ENCODE measurements at regions of chr19 and their contacts with region 1.

Region 1: DNA sequence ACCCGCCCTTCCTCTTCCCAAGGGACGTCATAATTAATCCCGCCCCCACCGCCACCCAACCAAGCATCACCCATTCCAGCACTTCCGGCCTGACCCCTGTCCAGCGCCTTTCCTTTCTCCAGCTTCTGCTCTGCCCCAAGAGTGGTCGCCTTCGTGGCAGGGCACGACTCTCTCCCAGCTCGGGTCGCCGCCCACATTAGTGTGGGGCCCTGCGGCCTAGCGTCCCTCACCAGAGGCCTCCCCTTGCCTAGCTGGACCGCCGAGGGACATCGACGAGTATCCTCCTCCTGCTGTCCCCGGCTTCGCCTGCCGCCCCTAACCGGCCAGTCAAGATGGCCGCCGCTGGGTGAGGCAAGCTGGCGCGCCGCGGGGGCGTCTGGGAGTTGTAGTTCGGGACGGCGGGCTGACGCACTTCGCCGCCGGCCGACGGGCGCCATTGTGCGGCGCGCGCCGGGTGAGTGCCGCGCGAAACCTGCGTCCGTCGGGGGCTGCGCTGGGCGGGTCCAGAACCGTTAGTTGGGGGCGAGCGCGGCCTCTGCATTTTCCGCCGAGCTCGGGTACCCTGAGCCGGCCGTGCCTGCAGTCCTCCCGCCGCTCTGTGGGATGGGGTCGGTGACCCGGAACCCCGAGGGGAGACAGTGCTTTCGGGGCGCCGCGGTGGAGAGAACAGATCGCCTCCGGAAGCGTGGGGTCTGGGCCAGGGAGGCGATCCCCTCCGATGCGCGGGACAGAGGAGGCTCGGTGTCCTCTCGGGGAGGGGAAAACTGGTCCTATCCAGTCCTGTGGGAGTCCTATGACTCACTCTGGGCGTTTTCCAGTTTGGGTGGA is at the start of gene ZNF274:
- DNase-seq: peak; percentile 94
- H3K4me3 Mint-ChIP-seq: peak within 1 kb of the TSS; percentile 82
- H3K27ac Mint-ChIP-seq: peak within 1 kb of the TSS; percentile 94
- H3K4me1 Mint-ChIP-seq: peaks cover 13% of the 10 kb centered on the region
- H3K27me3 Mint-ChIP-seq: no peaks in the 10 kb centered on the region
- total RNA-seq, gene ZNF274: 14.6 to 16.9 TPM

Region 2: GRCh38 chr19:57527136-57527881 is 655.9 kb before region 1 on chr19 and contains the start of gene ZNF549:
- CTCF ChIA-PET with region 1: no interaction called
- intact Hi-C with region 1: loop called (anchors 1 kb)
- DNase-seq: peak; percentile 91
- H3K4me3 Mint-ChIP-seq: peak within 1 kb of the TSS; percentile 80
- H3K27ac Mint-ChIP-seq: peak within 1 kb of the TSS; percentile 70
- H3K4me1 Mint-ChIP-seq: peaks cover 14% of the 10 kb centered on the region
- H3K27me3 Mint-ChIP-seq: no peaks in the 10 kb centered on the region
- total RNA-seq, gene ZNF549: 1.8 TPM

Region 3: DNA sequence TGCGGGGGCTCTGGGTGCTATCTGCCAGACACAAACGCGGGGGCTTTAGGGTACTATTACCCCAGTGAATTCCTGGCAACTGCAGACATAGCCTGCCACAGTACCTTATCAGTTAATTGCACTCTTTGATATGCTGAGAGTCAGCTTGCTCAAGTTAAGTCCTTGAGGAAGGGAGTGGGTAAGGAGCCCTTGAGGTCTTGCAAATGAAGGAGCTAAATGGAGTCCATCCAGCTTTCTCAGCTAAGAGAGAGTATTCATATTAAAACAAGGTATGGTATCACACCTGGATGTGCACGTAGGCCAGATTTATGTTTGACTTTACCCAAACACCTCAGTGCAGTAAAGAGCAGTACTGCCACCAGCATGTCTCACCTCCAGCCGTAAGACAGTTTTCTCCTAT is 169.1 kb before region 1 on chr19:
- CTCF ChIA-PET with region 1: no interaction called
- intact Hi-C with region 1: no loop called
- DNase-seq: no peak
- H3K4me3 Mint-ChIP-seq: no peak overlapping the region
- H3K27ac Mint-ChIP-seq: no peak overlapping the region
- H3K4me1 Mint-ChIP-seq: no peaks in the 10 kb centered on the region
- H3K27me3 Mint-ChIP-seq: peaks cover 3% of the 10 kb centered on the region

Region 4: DNA sequence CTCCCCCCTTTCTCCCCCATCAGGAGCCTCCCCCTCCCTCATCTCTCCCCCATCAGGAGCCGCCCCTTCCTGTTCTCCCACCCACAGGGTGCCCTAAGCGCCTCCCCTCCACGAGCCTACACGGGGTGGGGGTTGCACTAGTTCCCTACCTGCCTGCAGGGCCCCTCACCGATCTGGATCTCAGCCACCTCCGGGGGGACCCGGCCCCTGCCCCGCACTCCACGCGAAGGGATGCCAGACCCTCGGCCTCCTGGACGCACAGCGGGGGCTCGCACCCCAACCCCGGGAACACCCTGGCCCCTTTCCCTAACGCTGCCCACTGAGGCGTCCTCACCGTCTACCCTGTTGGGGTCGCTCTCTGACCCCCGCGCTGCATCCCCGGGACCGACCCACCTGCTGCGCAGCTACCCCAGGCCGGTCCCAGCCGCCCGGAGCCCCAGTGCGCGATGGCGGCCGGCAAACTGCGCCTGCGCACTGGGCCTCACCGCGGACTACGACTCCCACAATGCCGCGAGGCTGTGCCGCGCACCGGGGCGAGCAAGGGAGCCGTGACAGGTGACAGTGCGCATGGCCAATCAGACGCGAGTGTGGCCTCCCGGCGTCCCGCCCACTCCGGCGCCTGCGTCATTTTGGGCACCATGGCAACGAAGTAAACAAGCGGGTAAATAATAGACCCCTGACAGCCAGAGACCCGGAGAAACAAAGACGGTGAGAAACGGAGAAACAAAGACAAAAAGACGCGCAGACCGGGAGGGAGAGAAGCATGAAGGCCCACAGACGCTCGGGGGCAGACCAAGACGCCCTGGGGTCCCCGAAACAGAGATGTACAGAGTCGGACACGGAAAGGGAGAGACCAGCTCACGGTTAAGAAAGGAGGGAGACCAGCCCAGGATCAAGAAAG is 85.2 kb before region 1 on chr19 and contains the start of gene ZSCAN18:
- CTCF ChIA-PET with region 1: no interaction called
- intact Hi-C with region 1: no loop called
- DNase-seq: peak; percentile 95
- H3K4me3 Mint-ChIP-seq: peak within 1 kb of the TSS; percentile 85
- H3K27ac Mint-ChIP-seq: peak within 1 kb of the TSS; percentile 93
- H3K4me1 Mint-ChIP-seq: peaks cover 14% of the 10 kb centered on the region
- H3K27me3 Mint-ChIP-seq: no peaks in the 10 kb centered on the region
- total RNA-seq, gene ZSCAN18: 25.7 to 26.1 TPM

Region 5: DNA sequence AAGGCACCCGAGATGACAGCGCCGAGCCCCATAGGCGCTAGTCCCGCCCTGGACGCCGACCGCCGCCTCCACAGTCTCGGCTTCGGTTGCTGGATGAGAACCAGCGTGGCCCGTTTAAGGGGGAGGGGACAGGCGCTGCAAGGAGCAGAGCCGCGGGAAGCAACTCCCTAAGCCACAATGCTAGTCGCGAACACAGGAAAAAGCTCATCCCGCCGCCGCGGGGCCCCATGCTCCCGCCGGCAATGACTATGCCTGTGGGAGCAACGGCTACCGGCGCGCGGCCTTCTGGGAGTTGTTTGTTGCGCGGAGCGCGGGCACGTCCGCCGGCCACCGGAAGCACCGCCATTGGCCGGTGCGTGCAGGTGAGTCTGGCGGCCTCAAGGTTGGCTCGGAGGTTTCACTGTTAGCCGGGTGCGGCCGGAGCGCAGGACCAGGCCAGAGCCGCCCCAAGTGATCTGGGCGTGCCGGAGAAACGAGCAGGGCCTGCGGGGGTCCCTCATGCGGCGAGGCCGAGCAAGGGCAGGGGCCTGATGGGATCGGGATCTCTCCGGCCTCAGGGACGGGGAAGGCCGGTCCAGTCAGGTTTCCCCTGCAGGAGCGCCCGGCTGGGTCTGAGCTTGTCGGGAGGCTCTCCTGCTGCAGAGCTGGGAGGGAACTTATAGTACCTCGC is 45.5 kb after region 1 on chr19 and contains the start of gene ZNF544:
- CTCF ChIA-PET with region 1: no interaction called
- intact Hi-C with region 1: loop called (anchors 1 kb)
- DNase-seq: peak; percentile 76
- H3K4me3 Mint-ChIP-seq: peak within 1 kb of the TSS; percentile 94
- H3K27ac Mint-ChIP-seq: peak within 1 kb of the TSS; percentile 92
- H3K4me1 Mint-ChIP-seq: peaks cover 29% of the 10 kb centered on the region
- H3K27me3 Mint-ChIP-seq: no peaks in the 10 kb centered on the region
- total RNA-seq, gene ZNF544: 32.4 to 35.4 TPM

Region 6: GRCh38 chr19:58326914-58327726 is 143.9 kb after region 1 on chr19 and contains the start of gene ZSCAN22:
- CTCF ChIA-PET with region 1: no interaction called
- intact Hi-C with region 1: loop called (anchors 1 kb)
- DNase-seq: peak; percentile 95
- H3K4me3 Mint-ChIP-seq: no peak within 1 kb of the TSS
- H3K27ac Mint-ChIP-seq: no peak within 1 kb of the TSS
- H3K4me1 Mint-ChIP-seq: no peaks in the 10 kb centered on the region
- H3K27me3 Mint-ChIP-seq: no peaks in the 10 kb centered on the region
- total RNA-seq, gene ZSCAN22: 1.2 to 1.3 TPM

Region 7: GRCh38 chr19:58408152-58409009 is 225.2 kb after region 1 on chr19 and contains the start of gene ZNF584:
- CTCF ChIA-PET with region 1: no interaction called
- intact Hi-C with region 1: loop called (anchors 1 kb)
- DNase-seq: peak; percentile 97
- H3K4me3 Mint-ChIP-seq: peak within 1 kb of the TSS; percentile 89
- H3K27ac Mint-ChIP-seq: peak within 1 kb of the TSS; percentile 93
- H3K4me1 Mint-ChIP-seq: peaks cover 30% of the 10 kb centered on the region
- H3K27me3 Mint-ChIP-seq: no peaks in the 10 kb centered on the region
- total RNA-seq, gene ZNF584: 3.4 to 4.8 TPM

Region 8: GRCh38 chr19:58499021-58499927 is 316.1 kb after region 1 on chr19:
- CTCF ChIA-PET with region 1: no interaction called
- intact Hi-C with region 1: loop called (anchors 1 kb)
- DNase-seq: peak; percentile 100
- H3K4me3 Mint-ChIP-seq: peak overlapping the region; percentile 92
- H3K27ac Mint-ChIP-seq: peak overlapping the region; percentile 81
- H3K4me1 Mint-ChIP-seq: peaks cover 23% of the 10 kb centered on the region
- H3K27me3 Mint-ChIP-seq: no peaks in the 10 kb centered on the region

Measured in activated naive CD4-positive, alpha-beta T cell treated with anti-CD3 and anti-CD28 coated beads for 36 hours (primary cell).